ENCODE measurements at regions of chr6 and their contacts with region 1.

Region 1: DNA sequence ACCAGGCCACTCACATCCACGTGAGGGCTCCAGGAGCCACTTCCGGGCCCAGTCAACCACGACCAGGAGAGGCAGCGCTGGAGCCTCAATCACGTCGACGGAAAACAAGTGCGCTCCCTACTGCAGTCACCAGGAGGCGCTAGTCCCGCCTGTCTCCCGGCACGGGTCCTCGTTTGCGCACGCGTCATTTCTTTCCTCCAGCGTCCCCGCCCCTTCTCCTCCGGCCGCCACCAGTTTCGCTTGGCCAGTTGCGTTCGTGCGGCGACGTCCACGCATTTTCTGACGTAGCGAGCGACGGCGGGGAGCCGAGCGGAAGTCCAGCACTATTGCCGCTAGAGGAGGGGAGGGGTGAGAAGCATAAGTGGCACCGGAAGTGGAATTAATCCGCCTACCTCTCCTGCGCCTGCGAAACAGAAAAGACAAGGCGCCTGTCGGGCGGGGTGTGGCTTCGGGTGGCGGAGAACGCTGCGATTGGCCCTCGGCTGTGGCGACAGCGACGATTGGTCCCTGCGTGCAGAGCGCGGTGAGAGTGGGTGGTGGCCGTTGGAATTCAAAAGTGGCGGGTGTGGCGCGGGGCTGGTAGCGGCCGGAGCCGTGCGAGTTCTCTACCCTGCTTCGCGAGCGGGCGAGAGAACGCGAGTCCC is at the start of gene KIFC1:
- DNase-seq: peak; percentile 99
- H3K4me3 ChIP-seq: peak within 1 kb of the TSS; percentile 18 to 78
- H3K4me3 Mint-ChIP-seq: peak within 1 kb of the TSS; percentile 83 to 94 (median 86)
- H3K27ac ChIP-seq: peak within 1 kb of the TSS; percentile 74
- H3K27ac Mint-ChIP-seq: peak within 1 kb of the TSS; percentile 89 to 99 (median 98)
- H3K4me1 ChIP-seq: peaks cover 21% of the 10 kb centered on the region
- H3K4me1 Mint-ChIP-seq: peaks cover 25 to 40% (median 30%) of the 10 kb centered on the region in 4 donors
- H3K27me3 ChIP-seq: no peaks in the 10 kb centered on the region
- H3K27me3 Mint-ChIP-seq: no peaks in the 10 kb centered on the region
- total RNA-seq, gene KIFC1: 0.61 to 0.69 TPM

Region 2: DNA sequence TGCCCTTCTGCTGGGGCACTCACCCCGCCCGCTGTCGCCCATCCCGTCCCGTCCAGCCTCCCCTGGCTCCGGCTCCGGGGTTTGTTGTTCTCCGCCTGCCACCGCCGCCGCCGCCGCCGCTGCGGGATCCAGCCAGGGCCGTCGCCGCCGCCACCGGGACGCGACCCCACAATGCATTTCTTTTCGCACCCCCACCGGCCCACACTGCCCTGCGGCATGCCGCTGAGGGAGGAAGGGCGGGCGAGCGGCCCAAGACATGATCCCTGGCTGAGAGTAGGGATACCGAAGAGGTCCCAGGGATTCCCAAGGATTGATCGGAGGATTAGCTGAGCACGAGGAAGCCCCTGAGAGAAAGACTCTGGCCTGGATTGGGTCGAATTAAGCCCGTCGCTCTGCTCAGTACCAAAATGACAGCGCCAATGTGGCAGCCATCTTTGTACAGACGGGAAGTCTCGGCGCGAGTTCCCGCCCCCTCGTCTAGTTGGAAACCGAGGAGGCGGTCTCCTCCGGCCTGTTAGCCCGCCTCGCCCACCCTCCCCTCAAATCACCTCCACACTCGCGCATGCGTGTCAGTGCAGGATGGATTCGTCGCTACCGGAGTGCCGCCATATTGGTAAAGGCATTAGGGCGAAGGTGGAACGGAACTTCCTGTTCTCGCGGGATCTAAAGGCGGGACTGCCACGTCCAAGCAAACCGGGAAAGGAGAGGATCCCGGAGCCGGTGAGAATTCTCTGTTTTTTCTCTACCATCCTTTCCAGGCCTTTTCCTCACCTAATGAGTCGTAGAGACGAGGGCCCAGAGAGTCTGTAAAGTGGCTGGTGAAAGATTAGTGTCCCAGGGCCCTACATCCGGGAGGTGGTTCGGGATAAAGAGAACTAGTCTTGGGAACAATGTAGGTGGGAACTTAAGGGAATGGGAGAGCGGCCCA is 190.9 kb before region 1 on chr6 and contains the starts of genes RXRB and SLC39A7:
- CTCF ChIA-PET with region 1: no interaction called
- POLR2A ChIA-PET with region 1: no interaction called
- intact Hi-C with region 1: loop called (anchors 1 kb)
- DNase-seq: peak; percentile 95 to 99 (median 98)
- H3K4me3 ChIP-seq: peak within 1 kb of the TSS; percentile 99
- H3K4me3 Mint-ChIP-seq: peak within 1 kb of the TSS; percentile 98 to 100 (median 99)
- H3K27ac ChIP-seq: peak within 1 kb of the TSS; percentile 88
- H3K27ac Mint-ChIP-seq: peak within 1 kb of the TSS; percentile 96 to 99 (median 98)
- H3K4me1 ChIP-seq: peaks cover 62% of the 10 kb centered on the region
- H3K4me1 Mint-ChIP-seq: peaks cover 45 to 82% (median 64%) of the 10 kb centered on the region in 4 donors
- H3K27me3 ChIP-seq: no peaks in the 10 kb centered on the region
- H3K27me3 Mint-ChIP-seq: no peaks in the 10 kb centered on the region
- total RNA-seq, gene RXRB: 89.2 to 94.3 TPM
- total RNA-seq, gene SLC39A7: 40.8 to 40.9 TPM

Region 3: DNA sequence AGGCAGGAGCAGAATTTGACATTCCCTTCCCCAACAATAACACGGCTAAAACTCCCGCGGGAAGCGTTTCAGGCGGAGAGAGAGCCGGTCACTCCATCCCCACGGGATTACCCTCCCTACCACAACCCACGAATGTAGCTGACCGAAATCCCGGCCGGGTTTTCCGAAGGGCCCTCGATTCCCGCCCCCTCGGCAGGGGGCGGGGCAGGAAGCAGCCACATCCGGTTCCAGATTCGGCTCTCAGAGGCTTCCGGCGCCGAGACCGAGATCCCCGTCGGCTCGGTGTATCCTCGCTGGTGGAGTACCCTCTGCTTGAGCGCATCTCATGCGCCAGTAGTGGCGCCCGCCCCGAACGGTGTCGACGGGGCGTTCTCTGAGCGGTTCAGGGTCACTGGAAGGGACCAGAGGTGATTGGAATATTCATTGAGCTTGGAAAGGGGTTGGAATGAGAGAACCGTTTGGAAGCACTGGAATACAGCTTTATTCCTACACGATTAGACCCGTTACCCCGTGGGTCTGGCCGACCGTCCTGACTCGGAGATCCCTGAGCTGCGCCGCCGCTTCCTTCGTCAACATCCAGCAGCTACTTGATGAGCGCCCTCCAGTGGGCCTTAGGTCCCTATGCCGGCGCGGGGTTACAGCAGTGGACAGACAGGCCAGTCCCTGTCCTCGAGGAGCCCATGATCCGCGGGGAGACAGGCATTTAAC is 92.0 kb before region 1 on chr6:
- CTCF ChIA-PET with region 1: interaction called, 5 read pairs
- POLR2A ChIA-PET with region 1: interaction called, 6 read pairs
- intact Hi-C with region 1: loop called (anchors 2 kb)
- DNase-seq: peak; percentile 91 to 94 (median 93)
- H3K4me3 ChIP-seq: peak overlapping the region; percentile 71 to 97
- H3K4me3 Mint-ChIP-seq: peak overlapping the region; percentile 99
- H3K27ac ChIP-seq: peak overlapping the region; percentile 94
- H3K27ac Mint-ChIP-seq: peak overlapping the region; percentile 96 to 100 (median 99)
- H3K4me1 ChIP-seq: peaks cover 27% of the 10 kb centered on the region
- H3K4me1 Mint-ChIP-seq: peaks cover 22 to 42% (median 31%) of the 10 kb centered on the region in 4 donors
- H3K27me3 ChIP-seq: no peaks in the 10 kb centered on the region
- H3K27me3 Mint-ChIP-seq: peaks cover 0 to 4% of the 10 kb centered on the region in 2 donors

Region 4: DNA sequence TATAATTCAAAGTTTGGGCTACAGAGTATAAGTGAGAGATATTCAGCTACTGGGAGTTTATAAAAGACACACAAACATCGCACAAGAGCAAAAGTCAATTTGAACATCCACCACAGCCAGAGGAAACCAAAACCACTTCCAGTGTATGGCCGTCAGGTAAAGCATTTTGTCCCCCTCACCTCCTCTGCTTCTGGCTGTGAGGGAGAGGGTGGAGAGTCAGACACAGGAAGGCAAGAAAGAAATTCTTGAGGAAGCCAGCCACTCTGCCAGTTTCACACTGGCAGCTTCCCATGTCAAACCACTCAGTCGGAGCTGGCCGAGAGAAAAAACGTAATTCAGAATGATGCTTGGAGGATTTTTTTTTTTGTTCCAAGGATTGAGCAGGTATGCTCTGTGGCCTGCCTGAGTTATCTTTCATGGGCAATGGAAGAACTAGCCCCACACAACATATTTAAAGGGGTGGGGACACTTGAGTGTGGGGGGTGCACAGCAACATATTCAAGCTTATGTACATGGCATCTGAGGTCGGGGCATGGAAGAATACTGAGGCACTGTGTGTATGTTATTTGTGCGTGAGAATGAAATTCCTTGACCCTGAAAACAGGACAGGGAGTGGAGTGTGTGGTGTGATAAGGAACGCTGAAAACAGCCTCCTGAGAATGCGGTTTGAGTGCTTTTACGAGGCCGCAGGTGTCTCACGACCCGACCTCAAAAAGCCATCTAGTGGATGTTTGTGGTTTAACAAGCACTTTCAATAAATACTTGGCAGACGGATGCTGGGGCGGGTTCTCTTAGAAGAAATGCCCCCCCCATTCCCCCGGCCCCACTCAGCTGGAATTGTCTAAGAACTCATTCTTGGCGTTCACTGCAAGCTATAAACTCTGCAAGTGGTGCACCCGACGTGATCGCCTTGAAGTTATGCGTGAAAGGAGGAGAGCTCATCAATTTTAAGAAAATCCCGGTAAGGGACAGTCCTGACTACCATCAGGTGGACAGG is 46.4 kb before region 1 on chr6:
- CTCF ChIA-PET with region 1: interaction called, 10 read pairs
- POLR2A ChIA-PET with region 1: interaction called, 32 read pairs
- intact Hi-C with region 1: loop called (anchors 1 kb)
- DNase-seq: peak; percentile 81 to 87 (median 84)
- H3K4me3 ChIP-seq: peak overlapping the region; percentile 11 to 61
- H3K4me3 Mint-ChIP-seq: peak overlapping the region; percentile 76 to 92 (median 85)
- H3K27ac ChIP-seq: peak overlapping the region; percentile 79
- H3K27ac Mint-ChIP-seq: peak overlapping the region; percentile 88 to 99 (median 98)
- H3K4me1 ChIP-seq: peaks cover 44% of the 10 kb centered on the region
- H3K4me1 Mint-ChIP-seq: peaks cover 23 to 49% (median 37%) of the 10 kb centered on the region in 4 donors
- H3K27me3 ChIP-seq: no peaks in the 10 kb centered on the region
- H3K27me3 Mint-ChIP-seq: no peaks in the 10 kb centered on the region

Region 5: DNA sequence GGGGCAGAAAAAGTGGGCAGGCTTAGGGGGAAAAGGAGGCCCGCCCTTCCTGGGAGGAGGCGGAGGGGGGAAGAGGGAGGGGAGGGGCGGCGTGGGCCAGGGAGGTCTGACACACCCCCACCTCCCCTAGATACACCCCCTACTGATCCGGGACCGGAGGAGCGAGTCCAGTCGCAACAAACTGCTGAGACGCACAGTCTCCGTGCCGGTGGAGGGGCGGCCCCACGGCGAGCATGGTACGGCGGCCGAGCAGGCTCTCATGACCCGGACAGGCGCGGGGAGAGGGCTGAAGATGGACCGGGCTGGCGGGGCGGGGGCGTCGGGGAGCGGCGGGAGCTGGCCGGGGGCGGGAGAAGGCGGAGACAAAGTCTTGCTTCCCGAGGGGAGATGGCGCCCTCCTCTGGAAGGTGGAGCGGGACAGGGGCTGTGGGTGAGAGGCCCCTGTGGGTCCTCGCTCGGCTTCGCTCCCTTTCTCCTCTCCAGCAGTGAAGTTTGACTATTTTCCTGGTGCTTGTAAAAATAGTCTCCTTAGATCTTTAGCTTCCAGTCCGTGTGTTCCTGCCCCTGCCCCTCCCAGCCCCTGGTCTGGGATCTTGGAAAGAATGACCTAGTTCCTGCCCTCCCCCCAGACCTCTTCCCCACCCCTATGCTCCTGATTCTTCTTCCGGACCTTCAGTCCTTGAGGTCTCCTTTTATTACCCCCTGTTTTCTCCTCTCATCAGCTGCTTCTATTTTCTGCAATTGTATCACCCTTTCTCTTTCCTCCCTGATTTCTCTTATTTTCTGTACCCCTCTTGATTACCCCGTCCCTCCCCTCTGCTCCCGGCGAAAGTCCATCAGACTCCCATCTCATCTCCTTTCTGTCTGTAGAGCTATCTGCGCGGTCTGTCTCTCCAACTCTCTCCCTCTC is 34.5 kb after region 1 on chr6:
- CTCF ChIA-PET with region 1: interaction called, 26 read pairs
- POLR2A ChIA-PET with region 1: interaction called, 26 read pairs
- intact Hi-C with region 1: loop called (anchors 1 kb)
- DNase-seq: peak; percentile 80 to 87 (median 80)
- H3K4me3 ChIP-seq: peak overlapping the region; percentile 59 to 63
- H3K4me3 Mint-ChIP-seq: peak overlapping the region; percentile 84 to 99 (median 94)
- H3K27ac ChIP-seq: peak overlapping the region; percentile 90
- H3K27ac Mint-ChIP-seq: peak overlapping the region; percentile 96 to 100 (median 98)
- H3K4me1 ChIP-seq: peaks cover 61% of the 10 kb centered on the region
- H3K4me1 Mint-ChIP-seq: peaks cover 62 to 96% (median 68%) of the 10 kb centered on the region in 4 donors
- H3K27me3 ChIP-seq: no peaks in the 10 kb centered on the region
- H3K27me3 Mint-ChIP-seq: no peaks in the 10 kb centered on the region

Region 6: GRCh38 chr6:33481189-33481588 is 89.8 kb after region 1 on chr6:
- CTCF ChIA-PET with region 1: interaction called, 3 read pairs
- POLR2A ChIA-PET with region 1: no interaction called
- intact Hi-C with region 1: loop called (anchors 1 kb)
- DNase-seq: peak in 1 of 5 donors; percentile 2
- H3K4me3 ChIP-seq: no peak overlapping the region
- H3K4me3 Mint-ChIP-seq: no peak overlapping the region
- H3K27ac ChIP-seq: no peak overlapping the region
- H3K27ac Mint-ChIP-seq: no peak overlapping the region
- H3K4me1 ChIP-seq: no peaks in the 10 kb centered on the region
- H3K4me1 Mint-ChIP-seq: no peaks in the 10 kb centered on the region
- H3K27me3 ChIP-seq: no peaks in the 10 kb centered on the region
- H3K27me3 Mint-ChIP-seq: peaks cover 0 to 5% of the 10 kb centered on the region in 2 donors

Region 7: DNA sequence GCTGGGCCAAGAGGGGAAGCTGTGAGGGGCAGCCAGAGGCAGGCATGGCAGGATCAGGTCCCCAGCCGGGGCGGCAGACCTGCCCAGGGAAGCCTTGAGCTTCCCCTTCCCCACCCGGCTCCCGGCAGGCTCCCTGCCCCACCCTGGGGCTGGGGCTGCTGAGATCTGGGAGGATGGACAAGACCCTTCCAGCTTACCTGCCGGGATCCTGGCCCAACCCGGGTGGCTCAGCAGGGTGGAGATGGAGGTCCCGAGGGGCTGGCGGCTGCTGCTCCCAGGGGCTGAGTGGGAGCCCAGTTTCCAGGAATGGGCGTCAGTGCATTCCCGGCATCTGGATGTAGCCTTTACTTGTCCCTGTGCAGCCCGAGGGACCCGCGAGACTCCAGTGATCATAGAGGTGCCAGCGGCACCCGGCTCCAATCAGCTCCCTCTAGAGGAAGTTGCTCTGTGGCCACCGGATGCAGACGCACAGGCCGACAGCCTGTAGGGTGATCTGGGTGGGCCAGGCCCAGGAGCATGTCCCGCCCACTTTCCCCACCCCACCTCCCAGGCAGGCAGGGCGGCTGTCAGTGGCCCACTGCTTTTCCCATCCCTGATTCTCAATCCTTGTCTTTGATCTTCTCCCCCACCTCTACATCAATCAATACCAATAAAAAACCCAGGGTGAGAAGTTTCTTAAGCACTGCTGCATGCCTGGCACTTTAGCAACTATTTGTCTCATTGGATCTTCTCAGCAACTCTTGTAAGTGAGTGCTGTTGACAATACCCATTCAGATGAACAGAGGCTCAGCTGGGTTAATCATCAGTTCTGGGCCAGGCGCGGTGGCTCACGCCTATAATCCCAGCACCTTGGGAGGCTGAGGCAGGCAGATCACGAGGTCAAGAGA is 188.7 kb after region 1 on chr6 and contains the start of gene BAK1:
- CTCF ChIA-PET with region 1: interaction called, 4 read pairs
- POLR2A ChIA-PET with region 1: interaction called, 5 read pairs
- intact Hi-C with region 1: loop called (anchors 1 kb)
- DNase-seq: peak; percentile 78 to 89 (median 79)
- H3K4me3 ChIP-seq: peak within 1 kb of the TSS; percentile 88 to 98
- H3K4me3 Mint-ChIP-seq: peak within 1 kb of the TSS; percentile 93 to 100 (median 98)
- H3K27ac ChIP-seq: peak within 1 kb of the TSS; percentile 90
- H3K27ac Mint-ChIP-seq: peak within 1 kb of the TSS; percentile 98 to 100 (median 99)
- H3K4me1 ChIP-seq: peaks cover 31% of the 10 kb centered on the region
- H3K4me1 Mint-ChIP-seq: peaks cover 14 to 58% (median 32%) of the 10 kb centered on the region in 4 donors
- H3K27me3 ChIP-seq: no peaks in the 10 kb centered on the region
- H3K27me3 Mint-ChIP-seq: no peaks in the 10 kb centered on the region
- total RNA-seq, gene BAK1: 26.2 to 27.2 TPM

Region 8: GRCh38 chr6:33654831-33655554 is 263.6 kb after region 1 on chr6:
- CTCF ChIA-PET with region 1: no interaction called
- POLR2A ChIA-PET with region 1: no interaction called
- intact Hi-C with region 1: no loop called
- DNase-seq: peak in 1 of 5 donors; percentile 5
- H3K4me3 ChIP-seq: no peak overlapping the region
- H3K4me3 Mint-ChIP-seq: no peak overlapping the region
- H3K27ac ChIP-seq: no peak overlapping the region
- H3K27ac Mint-ChIP-seq: peak overlapping the region in 4 of 7 donors; percentile 42 to 76 (median 73)
- H3K4me1 ChIP-seq: no peaks in the 10 kb centered on the region
- H3K4me1 Mint-ChIP-seq: peaks cover 2 to 13% (median 6%) of the 10 kb centered on the region in 4 donors
- H3K27me3 ChIP-seq: no peaks in the 10 kb centered on the region
- H3K27me3 Mint-ChIP-seq: no peaks in the 10 kb centered on the region

Measured in CD4-positive, alpha-beta memory T cell (primary cell).